Activated CD4-positive, alpha-beta T cell treated with anti-CD3 and anti-CD28 coated beads, Interleukin-2, amount 10 ng/mL, durations not matched to agents 24 days and 14 days (primary cell): ENCODE measurements at regions of chr16 and their contacts with region 1.

Region 1: DNA sequence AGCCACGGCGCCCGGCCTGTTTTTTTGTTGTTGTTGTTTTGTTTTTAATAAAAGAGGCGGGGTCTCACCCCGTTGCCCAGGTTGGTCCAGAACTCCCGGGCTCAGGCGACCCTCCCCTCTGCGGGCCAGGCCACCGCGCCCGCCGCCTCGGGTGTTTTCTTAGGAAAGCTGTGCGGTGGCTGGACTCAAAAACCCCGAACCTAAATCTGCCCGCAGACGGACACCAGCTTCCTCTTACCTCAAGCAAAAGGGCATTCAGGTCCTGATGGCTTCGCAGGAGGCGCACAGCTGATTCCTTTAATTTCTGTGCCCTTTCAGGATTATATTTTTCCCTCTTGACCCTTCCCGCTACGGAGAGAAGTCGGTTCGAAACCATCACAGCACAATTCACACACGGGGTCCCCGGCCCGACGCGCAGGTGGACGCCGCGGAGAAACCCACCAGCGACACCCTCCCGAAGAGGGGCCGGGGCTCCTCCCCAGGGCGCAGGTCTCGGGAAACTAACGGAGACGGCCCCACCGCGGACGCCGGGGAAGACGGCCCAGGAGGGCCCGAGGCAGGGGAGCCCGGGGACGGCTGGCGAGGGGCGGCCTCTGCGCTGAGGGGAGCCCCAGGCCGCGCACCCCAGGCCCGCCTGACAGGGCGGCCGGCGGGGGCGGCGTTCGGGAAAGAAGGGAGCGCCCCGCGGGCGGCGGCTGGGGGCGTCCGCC is 653 bp downstream of the FANCA start:
- DNase-seq: peak; percentile 63
- H3K4me3 Mint-ChIP-seq: peak overlapping the region; percentile 89
- H3K27ac Mint-ChIP-seq: peak overlapping the region; percentile 67
- H3K4me1 Mint-ChIP-seq: peaks cover 29% of the 10 kb centered on the region
- H3K27me3 Mint-ChIP-seq: no peaks in the 10 kb centered on the region

Region 2: DNA sequence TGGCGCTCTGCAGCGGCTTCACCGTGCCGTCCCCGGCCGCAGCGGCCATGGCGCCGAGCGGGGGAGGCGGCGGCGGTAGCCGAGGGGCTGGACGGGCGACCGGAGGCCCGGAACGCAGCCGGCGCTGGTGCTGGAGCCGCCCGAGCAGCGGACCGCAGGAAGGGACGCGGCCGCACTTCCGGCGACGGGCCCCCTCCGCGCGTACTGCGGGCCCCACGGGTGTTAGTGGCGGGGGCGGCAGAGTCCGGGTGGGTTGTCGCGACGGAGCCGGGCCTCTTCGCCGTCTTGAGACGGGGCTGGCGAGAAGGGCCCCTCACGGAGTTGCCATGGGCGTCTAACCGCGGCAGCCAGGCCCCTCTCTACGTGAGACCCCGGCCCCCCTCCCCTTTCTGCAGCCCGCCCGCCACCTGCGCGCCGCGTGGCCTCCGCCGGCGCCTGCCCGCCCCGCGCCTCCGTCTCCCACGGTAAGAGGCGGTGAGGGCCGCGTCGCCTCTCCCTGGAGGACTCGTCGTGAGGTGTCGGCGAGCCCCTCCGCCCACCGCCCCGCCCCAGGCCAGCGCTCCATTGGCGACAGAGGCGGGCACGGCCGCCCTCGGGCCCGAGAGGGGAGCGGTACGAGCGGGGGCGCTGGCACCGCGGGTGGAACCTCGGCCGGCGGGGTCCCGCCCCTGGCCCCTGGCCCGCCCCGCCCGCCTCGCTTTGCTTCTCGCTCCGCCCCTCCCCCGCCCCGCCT is 94.8 kb before region 1 on chr16 and contains the starts of genes VPS9D1 and ZNF276:
- intact Hi-C with region 1: loop called (anchors 5 kb)
- DNase-seq: peak; percentile 94
- H3K4me3 Mint-ChIP-seq: peak within 1 kb of the TSS; percentile 90
- H3K27ac Mint-ChIP-seq: peak within 1 kb of the TSS; percentile 92
- H3K4me1 Mint-ChIP-seq: peaks cover 37% of the 10 kb centered on the region
- H3K27me3 Mint-ChIP-seq: no peaks in the 10 kb centered on the region
- total RNA-seq, gene VPS9D1: 3.6 and 3.9 TPM in 2 replicates
- total RNA-seq, gene ZNF276: 32.9 and 33.3 TPM in 2 replicates

Region 3: GRCh38 chr16:89795676-89796075 is 20.1 kb before region 1 on chr16:
- intact Hi-C with region 1: no loop called
- DNase-seq: no peak
- H3K4me3 Mint-ChIP-seq: no peak overlapping the region
- H3K27ac Mint-ChIP-seq: peak overlapping the region; percentile 6
- H3K4me1 Mint-ChIP-seq: peaks cover 1% of the 10 kb centered on the region
- H3K27me3 Mint-ChIP-seq: no peaks in the 10 kb centered on the region

Region 4: GRCh38 chr16:89828199-89828778 is 12.5 kb after region 1 on chr16 and contains the start of gene SPIRE2:
- intact Hi-C with region 1: loop called (anchors 1 kb)
- DNase-seq: peak; percentile 95
- H3K4me3 Mint-ChIP-seq: peak within 1 kb of the TSS; percentile 72
- H3K27ac Mint-ChIP-seq: no peak within 1 kb of the TSS
- H3K4me1 Mint-ChIP-seq: peaks cover 5% of the 10 kb centered on the region
- H3K27me3 Mint-ChIP-seq: peaks cover 19% of the 10 kb centered on the region
- total RNA-seq, gene SPIRE2: 1.9 and 2.0 TPM in 2 replicates

Region 5: DNA sequence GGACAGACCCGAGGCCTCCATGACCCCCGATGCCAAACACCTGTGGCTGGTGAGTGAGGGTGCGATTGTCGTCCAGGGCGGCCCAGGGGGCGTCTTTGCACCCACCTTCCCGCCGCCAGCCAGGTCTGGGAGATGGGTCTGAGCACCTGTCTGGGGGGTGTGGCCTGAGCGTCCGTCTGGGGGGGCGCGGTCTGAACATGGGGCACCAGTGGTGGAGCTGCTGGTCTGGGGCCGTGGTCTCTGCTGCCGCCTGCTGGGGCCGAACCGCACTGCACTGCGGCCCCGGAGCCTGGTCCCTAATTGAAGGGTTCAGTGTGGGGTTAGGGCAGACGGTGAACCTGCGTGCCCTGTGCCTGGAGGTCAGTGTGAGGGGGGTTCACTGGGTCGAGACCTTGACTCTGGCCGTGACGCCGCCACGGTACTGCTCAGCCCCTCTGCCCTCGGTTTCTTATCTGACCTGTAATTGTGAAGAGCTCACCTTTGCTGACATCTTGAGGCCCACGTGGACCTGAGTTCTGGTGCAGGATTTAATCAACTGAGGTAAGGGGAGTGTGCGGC is 45.0 kb after region 1 on chr16:
- intact Hi-C with region 1: loop called (anchors 2 kb)
- DNase-seq: peak; percentile 95
- H3K4me3 Mint-ChIP-seq: no peak overlapping the region
- H3K27ac Mint-ChIP-seq: no peak overlapping the region
- H3K4me1 Mint-ChIP-seq: peaks cover 27% of the 10 kb centered on the region
- H3K27me3 Mint-ChIP-seq: peaks cover 1% of the 10 kb centered on the region

Region 6: GRCh38 chr16:89873972-89874689 is 58.3 kb after region 1 on chr16:
- intact Hi-C with region 1: loop called (anchors 1 kb)
- DNase-seq: peak; percentile 97
- H3K4me3 Mint-ChIP-seq: peak overlapping the region; percentile 92
- H3K27ac Mint-ChIP-seq: peak overlapping the region; percentile 98
- H3K4me1 Mint-ChIP-seq: peaks cover 13% of the 10 kb centered on the region
- H3K27me3 Mint-ChIP-seq: no peaks in the 10 kb centered on the region

Region 7: GRCh38 chr16:89922884-89923690 is 107.3 kb after region 1 on chr16 and contains the start of gene TUBB3:
- intact Hi-C with region 1: loop called (anchors 2 kb)
- DNase-seq: peak; percentile 92
- H3K4me3 Mint-ChIP-seq: peak within 1 kb of the TSS; percentile 83
- H3K27ac Mint-ChIP-seq: peak within 1 kb of the TSS; percentile 10
- H3K4me1 Mint-ChIP-seq: peaks cover 25% of the 10 kb centered on the region
- H3K27me3 Mint-ChIP-seq: peaks cover 19% of the 10 kb centered on the region
- total RNA-seq, gene TUBB3: 2.2 and 2.6 TPM in 2 replicates